Activated CD8-positive, alpha-beta T cell treated with anti-CD3 and anti-CD28 coated beads, Interleukin-2, amount 10 ng/mL, durations not matched to agents 7 days and 5 days (primary cell): ENCODE measurements at regions of chr6 and their contacts with region 1.

Region 1: GRCh38 chr6:1554476-1555310 is 55.0 kb upstream of the FOXC1 start:
- DNase-seq: peak; percentile 61
- ATAC-seq: peak; percentile 96
- H3K4me3 Mint-ChIP-seq: peak overlapping the region; percentile 66
- H3K27ac Mint-ChIP-seq: peak overlapping the region; percentile 81
- H3K4me1 Mint-ChIP-seq: peaks cover 8% of the 10 kb centered on the region
- H3K27me3 Mint-ChIP-seq: peaks cover 23% of the 10 kb centered on the region

Region 2: GRCh38 chr6:1524040-1524480 is 30.6 kb before region 1 on chr6:
- CTCF ChIA-PET with region 1: interaction called, 16 read pairs
- POLR2A ChIA-PET with region 1: no interaction called
- DNase-seq: peak; percentile 72
- ATAC-seq: peak; percentile 78
- H3K4me3 Mint-ChIP-seq: no peak overlapping the region
- H3K27ac Mint-ChIP-seq: peak overlapping the region; percentile 10
- H3K4me1 Mint-ChIP-seq: peaks cover 24% of the 10 kb centered on the region
- H3K27me3 Mint-ChIP-seq: peaks cover 4% of the 10 kb centered on the region